ENCODE measurements at regions of chr2 and their contacts with region 1.

Region 1: GRCh38 chr2:71250945-71251344 is 24.0 kb upstream of the PAIP2B start:
- DNase-seq: no peak
- ATAC-seq: no peak
- H3K4me3 ChIP-seq: no peak overlapping the region
- H3K27ac ChIP-seq: no peak overlapping the region
- H3K4me1 ChIP-seq: no peaks in the 10 kb centered on the region
- H3K27me3 ChIP-seq: peaks cover 1 to 15% of the 10 kb centered on the region in 2 experiments; a peak in 3 of 5 replicates
- CTCF ChIP-seq: no peak
- EP300 ChIP-seq: no peak
- POLR2A ChIP-seq: no peak
- RAD21 ChIP-seq: no peak

Region 2: GRCh38 chr2:71190656-71191569 is 60.0 kb before region 1 on chr2:
- CTCF ChIA-PET with region 1: no interaction called
- POLR2A ChIA-PET with region 1: no interaction called
- in situ Hi-C with region 1: no loop called
- intact Hi-C with region 1: loop called (anchors 2 kb)
- DNase-seq: peak; percentile 13
- ATAC-seq: peak; percentile 71
- H3K4me3 ChIP-seq: no peak overlapping the region
- H3K27ac ChIP-seq: no peak overlapping the region
- H3K4me1 ChIP-seq: no peaks in the 10 kb centered on the region
- H3K27me3 ChIP-seq: 0 out of 5 replicates have a peak, but pooled peaks cover 0 to 3% of the 10 kb centered on the region in 2 experiments
- CTCF ChIP-seq: peak; percentile 51
- EP300 ChIP-seq: no peak
- POLR2A ChIP-seq: no peak
- RAD21 ChIP-seq: no peak

Measured in HepG2 (cell line).